ENCODE measurements at regions of chr17 and their contacts with region 1.

Region 1: GRCh38 chr17:8189711-8190477 is at the start of gene BORCS6:
- DNase-seq: peak; percentile 97
- H3K4me3 Mint-ChIP-seq: no peak within 1 kb of the TSS
- H3K27ac Mint-ChIP-seq: no peak within 1 kb of the TSS
- H3K4me1 Mint-ChIP-seq: peaks cover 13% of the 10 kb centered on the region
- H3K27me3 Mint-ChIP-seq: no peaks in the 10 kb centered on the region
- total RNA-seq, gene BORCS6: 16.3 to 17.0 TPM

Region 2: DNA sequence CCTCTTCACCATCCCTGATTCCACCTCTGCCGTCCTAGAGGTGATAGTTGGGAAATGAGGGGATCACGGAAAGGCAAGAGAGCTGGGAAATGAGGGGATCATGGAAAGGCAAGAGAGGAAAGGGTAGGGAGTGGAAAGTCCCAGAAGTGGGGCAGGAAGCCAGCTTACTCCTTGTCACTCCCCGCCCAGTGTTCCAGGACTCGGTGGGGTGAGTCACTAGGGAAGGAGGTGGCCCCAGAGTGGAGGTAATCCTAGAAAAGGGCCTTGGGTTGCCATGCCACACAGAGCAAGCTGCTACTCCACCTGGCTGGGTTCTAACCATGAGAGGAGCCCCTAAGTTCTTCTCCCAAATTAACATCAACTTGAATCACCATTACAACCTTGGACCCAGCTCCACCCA is 86.3 kb before region 1 on chr17:
- CTCF ChIA-PET with region 1: no interaction called
- POLR2A ChIA-PET with region 1: no interaction called
- DNase-seq: no peak
- H3K4me3 Mint-ChIP-seq: no peak overlapping the region
- H3K27ac Mint-ChIP-seq: no peak overlapping the region
- H3K4me1 Mint-ChIP-seq: peaks cover 8% of the 10 kb centered on the region
- H3K27me3 Mint-ChIP-seq: peaks cover 4% of the 10 kb centered on the region

Region 3: DNA sequence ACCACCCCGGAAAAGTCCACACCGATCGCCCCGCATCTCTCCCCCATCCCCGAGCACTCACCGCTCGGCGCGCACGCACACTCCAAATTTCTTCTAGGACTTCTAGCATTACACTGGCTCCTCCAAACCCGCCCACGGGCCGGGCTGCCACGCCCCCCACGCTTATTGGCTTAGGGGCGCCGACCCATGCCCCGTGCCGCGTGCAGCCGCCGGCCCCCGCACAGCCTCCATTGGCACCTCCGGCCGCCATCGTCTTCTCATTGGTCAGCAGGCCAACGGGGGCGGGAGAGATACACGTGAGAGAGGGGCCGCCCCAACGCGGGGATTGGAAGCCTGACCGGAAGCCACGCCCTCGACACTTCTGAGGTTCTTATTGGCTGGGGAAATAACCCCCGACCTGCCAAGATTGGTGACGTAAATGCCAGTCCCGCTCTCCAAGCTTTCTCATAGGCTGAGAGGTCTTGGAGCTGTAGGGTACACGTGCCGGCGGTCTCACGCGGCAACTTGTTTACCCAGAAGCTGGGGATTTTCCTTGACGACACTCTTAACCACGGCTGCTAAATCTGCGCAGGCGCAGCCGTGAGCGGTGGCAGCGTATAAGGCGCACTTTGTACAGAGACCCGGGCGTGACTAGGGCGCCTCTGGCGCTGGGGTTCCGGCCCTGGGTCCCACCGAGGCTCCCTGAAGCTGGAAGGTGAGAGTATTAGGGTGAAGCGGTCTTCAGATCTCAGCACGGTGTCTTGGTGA is 33.5 kb before region 1 on chr17:
- CTCF ChIA-PET with region 1: interaction called, 5 read pairs
- POLR2A ChIA-PET with region 1: interaction called, 61 read pairs
- DNase-seq: peak; percentile 100
- H3K4me3 Mint-ChIP-seq: no peak overlapping the region
- H3K27ac Mint-ChIP-seq: no peak overlapping the region
- H3K4me1 Mint-ChIP-seq: peaks cover 51% of the 10 kb centered on the region
- H3K27me3 Mint-ChIP-seq: no peaks in the 10 kb centered on the region

Region 4: DNA sequence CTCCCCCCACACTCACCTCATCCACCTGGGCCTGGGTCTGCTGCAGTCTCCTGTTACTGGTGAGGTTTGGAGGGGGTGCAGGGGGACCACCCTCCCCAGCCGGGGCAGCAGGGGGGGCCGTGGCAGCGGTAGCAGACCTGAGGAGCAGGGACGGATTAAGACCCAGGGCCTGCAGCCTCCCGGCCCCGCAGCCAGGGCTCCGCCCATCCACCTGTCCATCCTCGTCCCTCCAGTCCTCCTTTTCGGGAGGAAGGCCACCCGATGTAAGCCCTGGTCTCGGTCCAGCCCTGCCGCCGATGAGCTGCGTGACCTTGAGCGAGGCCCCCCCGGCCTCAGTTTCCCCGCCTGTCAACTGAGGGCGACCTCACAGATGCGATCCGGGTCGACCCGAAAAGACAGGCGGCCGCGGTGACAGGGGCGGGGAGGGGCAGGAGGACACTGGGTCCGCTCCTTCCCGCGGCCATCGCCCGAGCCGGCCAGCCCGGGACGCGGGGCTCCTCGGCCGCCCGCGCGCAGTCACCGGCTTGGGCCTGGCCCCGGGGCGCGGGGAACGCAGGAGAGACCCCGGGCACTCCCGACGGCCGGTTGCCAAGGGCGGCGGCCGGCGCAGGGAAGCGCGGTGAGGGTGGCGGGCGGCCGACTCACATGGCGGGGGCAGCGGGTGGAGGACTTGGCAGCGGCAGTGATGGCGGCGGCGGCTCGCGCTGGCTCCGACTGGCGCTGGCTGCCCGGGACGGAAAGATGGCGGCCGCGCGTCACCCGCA is 27.5 kb before region 1 on chr17 and contains the start of gene VAMP2:
- CTCF ChIA-PET with region 1: interaction called, 5 read pairs
- POLR2A ChIA-PET with region 1: interaction called, 61 read pairs
- DNase-seq: peak; percentile 89
- H3K4me3 Mint-ChIP-seq: peak within 1 kb of the TSS; percentile 81
- H3K27ac Mint-ChIP-seq: peak within 1 kb of the TSS; percentile 98
- H3K4me1 Mint-ChIP-seq: peaks cover 59% of the 10 kb centered on the region
- H3K27me3 Mint-ChIP-seq: no peaks in the 10 kb centered on the region
- total RNA-seq, gene VAMP2: 75.2 to 79.1 TPM

Region 5: GRCh38 chr17:8204761-8205555 is 15.1 kb after region 1 on chr17:
- CTCF ChIA-PET with region 1: interaction called, 6 read pairs
- POLR2A ChIA-PET with region 1: interaction called, 612 read pairs
- DNase-seq: no peak
- H3K4me3 Mint-ChIP-seq: no peak overlapping the region
- H3K27ac Mint-ChIP-seq: no peak overlapping the region
- H3K4me1 Mint-ChIP-seq: peaks cover 47% of the 10 kb centered on the region
- H3K27me3 Mint-ChIP-seq: no peaks in the 10 kb centered on the region

Region 6: GRCh38 chr17:8209909-8210760 is 20.2 kb after region 1 on chr17 and contains the start of gene AURKB:
- CTCF ChIA-PET with region 1: interaction called, 6 read pairs
- POLR2A ChIA-PET with region 1: interaction called, 612 read pairs
- DNase-seq: peak; percentile 94
- H3K4me3 Mint-ChIP-seq: peak within 1 kb of the TSS; percentile 87
- H3K27ac Mint-ChIP-seq: peak within 1 kb of the TSS; percentile 86
- H3K4me1 Mint-ChIP-seq: peaks cover 39% of the 10 kb centered on the region
- H3K27me3 Mint-ChIP-seq: no peaks in the 10 kb centered on the region
- total RNA-seq, gene AURKB: 160 to 167 TPM

Region 7: DNA sequence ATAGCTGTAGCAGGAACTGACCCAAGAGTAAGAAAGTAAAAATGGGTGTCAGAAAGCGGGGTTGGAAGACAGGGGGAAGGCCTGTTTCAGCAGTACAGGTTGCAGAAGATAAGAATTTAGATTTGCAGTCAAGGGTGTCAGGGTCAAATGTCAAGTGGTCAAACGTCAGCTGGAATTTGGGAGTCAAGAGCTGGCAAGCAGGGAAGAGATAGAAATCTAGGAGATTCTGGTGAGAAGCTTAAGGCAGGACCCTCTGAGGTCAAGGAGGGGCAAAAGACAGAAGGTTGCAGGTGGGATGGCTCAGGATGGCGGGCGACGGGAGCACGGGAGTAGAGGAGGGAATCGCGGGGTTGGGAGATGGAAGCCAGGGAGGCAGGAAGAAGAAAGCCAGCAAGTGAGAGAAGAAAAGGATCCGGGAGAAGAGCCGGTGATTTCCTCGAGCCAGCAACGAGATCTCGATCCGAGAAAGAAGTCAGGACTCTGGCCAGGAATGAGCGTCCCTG is 105.0 kb after region 1 on chr17:
- CTCF ChIA-PET with region 1: interaction called, 9 read pairs
- POLR2A ChIA-PET with region 1: interaction called, 14 read pairs
- DNase-seq: no peak
- H3K4me3 Mint-ChIP-seq: peak overlapping the region; percentile 89
- H3K27ac Mint-ChIP-seq: peak overlapping the region; percentile 83
- H3K4me1 Mint-ChIP-seq: peaks cover 53% of the 10 kb centered on the region
- H3K27me3 Mint-ChIP-seq: no peaks in the 10 kb centered on the region

Region 8: GRCh38 chr17:8320990-8321389 is 131.1 kb after region 1 on chr17:
- CTCF ChIA-PET with region 1: no interaction called
- POLR2A ChIA-PET with region 1: no interaction called
- DNase-seq: no peak
- H3K4me3 Mint-ChIP-seq: no peak overlapping the region
- H3K27ac Mint-ChIP-seq: no peak overlapping the region
- H3K4me1 Mint-ChIP-seq: peaks cover 8% of the 10 kb centered on the region
- H3K27me3 Mint-ChIP-seq: peaks cover 22% of the 10 kb centered on the region